Mammary epithelial cell (primary cell): ENCODE measurements at regions of chr15 and their contacts with region 1.

Region 1: DNA sequence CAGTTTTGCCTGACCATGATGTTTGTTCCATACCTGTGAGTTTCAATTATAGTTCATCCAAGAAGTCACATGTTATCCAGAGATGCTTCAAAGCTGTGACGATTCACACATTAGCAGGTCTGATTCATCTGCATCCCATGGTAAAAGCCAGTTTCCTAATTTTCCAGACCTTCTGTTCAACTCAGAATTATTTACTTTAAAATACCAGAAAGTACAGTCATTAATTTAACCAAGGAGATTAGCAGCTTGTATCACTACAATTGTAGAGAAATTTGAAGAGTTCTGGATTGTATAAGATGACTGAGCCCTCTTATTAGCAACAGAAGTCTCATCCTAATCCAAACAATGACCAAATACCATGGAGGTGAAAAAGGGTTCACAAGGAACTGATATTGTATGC is 76.1 kb upstream of the THBS1 start:
- DNase-seq: peak; percentile 80
- H3K4me3 ChIP-seq: no peak overlapping the region
- H3K27ac ChIP-seq: no peak overlapping the region
- H3K4me1 ChIP-seq: peaks cover 24% of the 10 kb centered on the region
- H3K27me3 ChIP-seq: no peaks in the 10 kb centered on the region
- CTCF ChIP-seq: no peak

Region 2: DNA sequence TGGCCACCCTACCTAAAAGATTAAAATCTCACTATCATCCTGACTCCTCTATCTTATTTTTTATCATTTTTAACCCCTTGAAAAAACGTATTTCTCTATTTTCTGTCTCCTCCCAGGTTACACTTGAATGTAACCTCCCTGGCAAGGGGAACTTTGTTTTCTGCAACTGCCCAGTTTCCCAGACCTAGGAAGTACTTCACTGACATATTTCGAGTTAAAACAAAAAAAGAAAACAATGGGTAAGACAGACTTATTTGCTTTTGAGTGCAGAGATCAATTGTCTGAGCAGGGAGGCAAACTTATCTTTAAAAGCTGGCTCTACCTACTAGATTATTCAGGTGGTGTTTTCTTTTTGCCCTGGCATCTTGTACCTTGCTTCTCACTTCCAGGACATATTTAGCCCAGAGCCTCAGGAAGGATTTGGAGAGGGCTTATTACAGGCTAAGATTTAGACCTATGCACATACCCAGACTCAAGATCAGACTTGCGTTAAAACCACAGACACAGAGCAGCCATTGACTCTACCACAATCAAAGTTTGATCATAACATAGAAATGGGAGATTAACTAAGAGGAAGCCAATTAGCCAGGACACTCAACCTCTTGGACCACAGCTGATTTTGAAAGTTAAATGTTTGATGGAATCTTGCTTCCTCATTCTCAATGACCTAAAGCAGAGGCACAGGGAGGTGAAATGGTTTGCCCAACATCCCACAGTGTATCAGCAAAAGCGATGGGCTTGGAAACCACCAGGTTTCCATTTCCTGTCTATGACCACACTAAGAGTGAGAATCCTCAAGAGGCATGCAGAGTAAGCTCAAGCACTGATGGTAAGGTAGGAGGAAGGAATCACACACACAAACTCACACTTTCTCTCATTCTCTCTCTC is 93.5 kb before region 1 on chr15:
- CTCF ChIA-PET with region 1: no interaction called
- dilution Hi-C with region 1: loop called (anchors 5 kb)
- in situ Hi-C with region 1: no loop called
- intact Hi-C with region 1: no loop called
- DNase-seq: peak; percentile 90
- H3K4me3 ChIP-seq: no peak overlapping the region
- H3K27ac ChIP-seq: peak overlapping the region; percentile 55
- H3K4me1 ChIP-seq: peaks cover 32% of the 10 kb centered on the region
- H3K27me3 ChIP-seq: no peaks in the 10 kb centered on the region
- CTCF ChIP-seq: no peak

Region 3: DNA sequence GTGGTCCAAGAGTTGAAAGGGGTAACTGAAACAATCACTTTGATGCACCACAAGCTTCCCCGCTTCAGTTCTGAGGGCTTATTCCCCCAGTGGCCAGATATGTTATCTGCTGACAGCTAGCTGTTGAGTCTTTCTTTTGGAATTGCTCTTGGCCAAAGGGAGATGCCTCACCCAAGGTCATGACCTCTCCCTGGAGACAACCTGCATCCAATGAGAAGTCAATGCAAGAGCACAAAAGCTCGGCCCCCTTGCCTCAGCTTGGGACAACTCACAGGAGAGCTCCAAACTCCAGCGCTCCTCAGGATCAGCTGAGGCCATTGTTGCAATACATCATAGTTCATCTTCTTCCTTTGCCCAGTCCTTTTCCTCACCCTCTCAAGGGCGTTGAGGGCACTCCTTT is 45.1 kb after region 1 on chr15:
- CTCF ChIA-PET with region 1: no interaction called
- dilution Hi-C with region 1: loop called (anchors 5 kb)
- in situ Hi-C with region 1: no loop called
- intact Hi-C with region 1: no loop called
- DNase-seq: no peak
- H3K4me3 ChIP-seq: no peak overlapping the region
- H3K27ac ChIP-seq: no peak overlapping the region
- H3K4me1 ChIP-seq: no peaks in the 10 kb centered on the region
- H3K27me3 ChIP-seq: no peaks in the 10 kb centered on the region
- CTCF ChIP-seq: no peak